GM18951 (cell line): ENCODE measurements at regions of chrX and their contacts with region 1.

Region 1: DNA sequence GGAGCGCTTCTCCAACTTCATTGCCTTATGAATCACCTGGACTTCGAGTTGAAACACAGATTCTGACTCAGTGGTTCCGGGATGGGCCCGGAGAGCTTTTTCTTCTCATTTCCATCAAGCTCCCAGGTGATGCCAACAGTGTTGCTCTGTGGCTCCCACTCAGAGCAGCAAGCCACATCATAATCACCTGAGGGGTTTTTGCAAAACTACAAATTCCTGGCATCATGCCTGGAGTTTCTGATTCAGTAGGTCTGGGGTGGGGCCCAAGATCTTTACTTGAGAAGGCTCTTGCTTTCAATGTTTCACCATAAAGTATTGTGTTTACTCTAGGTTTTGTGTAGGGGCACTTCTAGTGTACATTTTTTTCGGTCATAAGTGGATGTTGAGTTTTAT is 7.0 kb downstream of the MTM1 start:
- POLR2A ChIP-seq: no peak

Region 2: DNA sequence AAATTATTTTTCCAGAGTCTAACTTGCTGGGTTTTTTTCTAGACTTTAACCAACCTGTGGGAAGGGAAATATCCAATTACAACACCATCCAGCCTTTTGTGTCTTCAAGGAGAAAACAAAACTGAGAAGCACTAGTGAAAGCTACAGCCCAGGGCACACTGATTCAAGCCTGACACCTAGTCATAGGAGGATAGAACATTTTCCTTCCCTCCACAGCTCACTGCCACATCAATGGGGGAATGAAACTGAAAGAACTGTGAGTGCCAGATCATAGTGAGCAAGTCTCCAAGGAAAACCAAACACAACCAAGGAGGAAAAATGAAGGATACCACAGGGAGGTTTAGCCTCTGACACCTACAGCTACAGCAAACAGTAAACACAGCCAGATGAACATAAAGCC is 737.8 kb before region 1 on chrX:
- in situ Hi-C with region 1: no loop called
- POLR2A ChIP-seq: no peak

Region 3: DNA sequence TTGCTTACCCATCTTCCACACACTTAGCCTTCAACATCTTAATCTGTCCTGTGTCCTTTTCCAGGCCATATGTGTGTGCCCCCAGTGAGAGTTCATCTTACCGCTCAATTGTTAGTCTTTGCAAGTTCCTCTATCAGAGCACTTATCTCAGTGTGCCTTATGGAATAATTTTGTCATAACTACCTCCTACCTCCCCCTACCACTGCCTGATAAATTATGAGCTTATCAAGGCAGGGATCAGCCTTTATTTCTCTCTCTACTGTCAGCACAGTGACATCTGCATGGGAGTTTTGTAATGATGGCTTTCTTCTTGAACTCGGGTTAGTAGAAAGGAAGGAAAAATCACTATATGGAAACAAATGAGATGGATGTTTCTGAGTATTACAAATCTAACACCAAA is 46.2 kb after region 1 on chrX:
- in situ Hi-C with region 1: loop called (anchors 5 kb)
- POLR2A ChIP-seq: no peak

Region 4: DNA sequence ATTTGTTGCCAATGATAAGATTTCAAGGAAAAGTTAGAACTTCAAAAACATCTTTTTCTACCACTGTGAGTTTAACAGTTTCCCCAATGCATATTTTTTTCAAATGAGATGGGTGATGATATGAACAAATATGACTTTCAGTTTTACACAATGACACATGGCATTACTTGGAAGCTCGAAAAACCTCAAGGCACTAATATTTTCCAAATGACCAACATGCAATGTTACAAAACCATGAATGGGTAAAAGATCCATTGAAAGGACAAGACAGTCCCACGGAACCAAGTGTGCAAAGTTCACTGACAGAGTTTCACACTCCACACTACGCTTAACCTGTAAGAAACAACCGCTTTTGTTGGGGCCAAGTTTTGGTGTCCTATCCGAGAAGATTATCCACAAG is 238.5 kb after region 1 on chrX:
- in situ Hi-C with region 1: no loop called
- POLR2A ChIP-seq: no peak

Region 5: DNA sequence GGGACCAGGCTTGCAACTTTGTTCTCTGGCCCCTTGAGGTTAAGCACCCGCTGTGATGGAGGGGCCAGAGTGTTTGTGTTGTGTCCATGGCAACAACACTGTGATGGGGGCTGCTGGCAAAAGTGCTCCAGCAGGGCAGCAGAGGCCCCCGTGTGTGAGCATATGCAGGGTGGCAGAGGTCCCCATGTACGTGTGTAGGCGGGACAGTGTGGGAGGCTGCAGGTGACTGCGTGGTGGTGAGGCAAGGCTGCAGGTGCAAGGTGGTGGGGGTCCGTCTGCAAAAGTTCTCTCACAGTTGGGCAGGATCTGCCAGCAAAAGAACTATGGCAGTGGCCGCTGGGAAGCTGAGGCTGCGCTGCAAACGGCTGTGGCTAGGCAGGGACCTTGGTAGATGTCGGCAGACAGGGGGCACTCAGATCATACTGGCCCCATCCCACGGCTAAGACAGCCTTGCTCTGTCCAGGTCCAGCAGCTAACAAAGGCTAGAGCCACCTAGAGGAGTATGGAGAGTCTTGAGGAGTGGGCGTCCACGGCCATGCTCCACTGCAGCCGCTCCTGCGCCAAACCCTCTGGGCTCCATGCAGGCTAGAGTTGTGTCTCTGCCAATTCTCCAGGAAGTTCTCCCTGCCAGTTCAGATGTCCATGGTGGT is 941.3 kb after region 1 on chrX:
- in situ Hi-C with region 1: no loop called
- POLR2A ChIP-seq: no peak